ENCODE measurements at regions of chr19 and their contacts with region 1.

Region 1: GRCh38 chr19:5369962-5370367 is 29.4 kb upstream of the PTPRS start:
- DNase-seq: peak; percentile 33 to 97
- H3K4me3 ChIP-seq: no peak overlapping the region
- H3K27ac ChIP-seq: no peak overlapping the region
- H3K4me1 ChIP-seq: no peaks in the 10 kb centered on the region
- H3K27me3 ChIP-seq: peaks cover 0 to 11% (median 3%) of the 10 kb centered on the region in 4 experiments; a peak in 4 of 7 replicates
- CTCF ChIP-seq: peak; percentile 79 to 97 (median 96)
- EP300 ChIP-seq: no peak
- POLR2A ChIP-seq: no peak
- RAD21 ChIP-seq: peak; percentile 68 to 69

Region 2: GRCh38 chr19:5387472-5387871 is 17.5 kb after region 1 on chr19:
- CTCF ChIA-PET with region 1: interaction called, 14 read pairs
- POLR2A ChIA-PET with region 1: no interaction called
- DNase-seq: no peak
- H3K4me3 ChIP-seq: no peak overlapping the region
- H3K27ac ChIP-seq: no peak overlapping the region
- H3K4me1 ChIP-seq: no peaks in the 10 kb centered on the region
- H3K27me3 ChIP-seq: no peaks in the 10 kb centered on the region
- CTCF ChIP-seq: peak in 1 of 3 experiments; percentile 8; a peak in 1 of 4 replicates
- EP300 ChIP-seq: no peak
- POLR2A ChIP-seq: no peak
- RAD21 ChIP-seq: peak in 1 of 2 experiments; percentile 8; a peak in 2 of 4 replicates

Measured in H1 (cell line).